Activated CD4-positive, alpha-beta T cell treated with anti-CD3 and anti-CD28 coated beads for 36 hours (primary cell): ENCODE measurements at regions of chr2 and their contacts with region 1.

Region 1: DNA sequence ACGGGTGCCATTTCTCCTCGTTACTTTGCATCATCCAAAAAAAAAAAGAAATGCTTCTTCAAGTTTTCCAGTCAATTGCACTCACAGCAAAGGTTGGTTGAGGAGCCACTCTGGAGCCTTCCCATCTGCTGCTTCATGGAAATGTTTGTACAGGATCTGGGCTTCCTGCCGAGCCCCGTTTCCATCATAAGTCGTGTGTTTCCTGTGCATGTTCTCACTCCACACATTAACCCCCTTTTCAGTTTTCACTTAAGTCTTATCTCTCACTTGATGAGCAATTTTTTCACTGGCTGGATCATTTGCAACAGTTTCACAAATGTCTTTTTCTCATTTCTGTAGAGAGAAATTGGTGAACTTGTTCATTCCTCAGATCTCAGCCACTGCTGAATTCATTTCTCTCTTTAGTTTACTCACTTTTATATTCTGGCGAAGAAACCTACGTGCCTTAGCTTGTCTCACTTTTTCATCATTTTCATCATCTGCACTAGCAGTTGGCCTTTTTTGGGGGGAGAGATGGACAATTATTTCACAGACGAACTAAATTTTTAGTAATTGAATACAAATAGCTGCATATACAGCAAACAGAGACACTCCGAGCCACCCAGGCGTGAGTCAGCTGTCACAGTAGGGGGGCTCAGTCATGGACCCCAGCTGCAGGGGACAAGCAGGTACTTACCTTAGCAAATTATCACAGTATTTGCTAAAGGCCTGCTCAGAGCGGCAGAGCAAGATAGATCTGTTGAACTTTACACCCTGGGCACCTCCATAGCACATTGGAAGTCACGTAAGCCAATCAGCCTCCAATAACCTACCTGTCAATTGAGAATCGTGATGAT is 750.8 kb upstream of the ID2 start:
- DNase-seq: peak; percentile 56
- ATAC-seq: peak; percentile 80
- H3K4me3 Mint-ChIP-seq: peak overlapping the region; percentile 0
- H3K27ac Mint-ChIP-seq: peak overlapping the region; percentile 93
- H3K4me1 Mint-ChIP-seq: peaks cover 33% of the 10 kb centered on the region
- H3K27me3 Mint-ChIP-seq: no peaks in the 10 kb centered on the region

Region 2: DNA sequence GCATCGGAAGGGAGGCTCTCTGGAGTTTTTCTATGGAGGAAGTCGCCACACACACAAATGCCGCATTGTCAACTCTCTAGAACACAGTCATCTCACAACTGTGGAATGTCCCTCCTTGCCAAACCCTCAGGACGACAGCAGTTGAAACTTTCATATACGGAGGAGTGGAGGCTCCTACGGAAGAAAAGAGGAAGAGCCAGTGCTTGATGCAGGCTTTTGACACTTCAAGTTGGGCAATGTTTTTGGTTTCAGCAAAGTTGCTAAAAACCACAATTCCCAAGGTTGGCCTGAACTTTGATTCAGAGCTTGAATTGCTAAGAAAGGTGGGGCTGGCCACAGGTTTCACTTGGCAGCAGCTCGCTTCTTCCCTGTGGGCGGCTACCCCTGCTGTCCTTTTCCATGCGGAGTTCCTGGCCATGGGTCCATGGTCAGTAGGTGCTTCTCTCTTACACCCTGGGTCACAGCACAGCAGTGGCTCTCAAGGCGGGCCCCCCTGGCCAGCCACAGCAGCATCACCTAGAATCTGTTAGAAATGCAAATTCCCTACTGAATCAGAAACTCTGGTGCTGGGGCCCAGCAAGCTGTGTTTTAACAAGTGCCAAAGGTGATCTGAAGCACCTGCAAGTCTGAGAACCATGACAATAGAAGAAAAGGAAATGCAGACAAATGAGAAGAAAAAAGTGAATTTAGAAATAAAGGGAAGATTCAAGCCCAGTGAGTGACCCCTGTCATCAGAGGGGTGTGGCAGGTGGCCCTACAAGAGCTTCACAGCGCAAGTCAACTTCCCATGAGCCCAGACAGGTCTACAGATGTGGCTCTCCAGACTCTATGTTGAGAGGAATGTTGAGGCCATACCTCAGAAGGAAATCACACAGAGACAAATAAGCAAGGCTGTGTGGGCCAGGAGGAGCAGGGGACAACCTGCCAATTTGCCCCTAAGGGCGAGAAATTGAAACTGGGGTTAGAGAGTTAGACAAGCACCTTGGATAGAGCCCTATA is 157.4 kb before region 1 on chr2:
- CTCF ChIA-PET with region 1: no interaction called
- POLR2A ChIA-PET with region 1: no interaction called
- intact Hi-C with region 1: loop called in 1 of 2 experiments (anchors 5 kb)
- DNase-seq: peak; percentile 66
- ATAC-seq: peak; percentile 76
- H3K4me3 Mint-ChIP-seq: peak overlapping the region; percentile 11
- H3K27ac Mint-ChIP-seq: peak overlapping the region; percentile 64
- H3K4me1 Mint-ChIP-seq: peaks cover 28% of the 10 kb centered on the region
- H3K27me3 Mint-ChIP-seq: peaks cover 3% of the 10 kb centered on the region

Region 3: DNA sequence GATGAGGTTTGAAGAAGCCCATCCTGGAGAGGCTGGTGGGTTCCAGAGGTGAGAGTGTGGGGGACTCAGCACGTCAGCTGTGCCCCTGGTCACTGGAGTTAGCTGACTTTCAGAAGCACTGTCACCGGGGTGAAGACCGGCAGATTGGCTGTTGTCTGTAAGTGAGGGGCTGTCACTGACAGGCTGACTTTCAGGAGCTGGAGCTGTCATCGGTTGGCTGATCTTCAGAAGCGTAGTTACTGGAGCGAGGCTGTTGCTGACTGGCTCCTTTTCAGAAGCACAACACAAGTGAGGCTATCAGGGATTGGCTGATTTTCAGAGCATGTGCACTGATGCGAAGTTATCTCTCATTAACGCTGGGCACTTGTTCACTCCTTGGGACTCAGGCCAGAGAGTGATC is 12.4 kb after region 1 on chr2:
- CTCF ChIA-PET with region 1: interaction called, 4 read pairs
- POLR2A ChIA-PET with region 1: no interaction called
- intact Hi-C with region 1: loop called in 1 of 2 experiments (anchors 1 kb)
- DNase-seq: no peak
- ATAC-seq: no peak
- H3K4me3 Mint-ChIP-seq: no peak overlapping the region
- H3K27ac Mint-ChIP-seq: no peak overlapping the region
- H3K4me1 Mint-ChIP-seq: peaks cover 26% of the 10 kb centered on the region
- H3K27me3 Mint-ChIP-seq: no peaks in the 10 kb centered on the region

Region 4: GRCh38 chr2:8169443-8169842 is 238.4 kb after region 1 on chr2:
- CTCF ChIA-PET with region 1: no interaction called
- POLR2A ChIA-PET with region 1: no interaction called
- intact Hi-C with region 1: no loop called
- DNase-seq: no peak
- ATAC-seq: no peak
- H3K4me3 Mint-ChIP-seq: no peak overlapping the region
- H3K27ac Mint-ChIP-seq: no peak overlapping the region
- H3K4me1 Mint-ChIP-seq: peaks cover 13% of the 10 kb centered on the region
- H3K27me3 Mint-ChIP-seq: no peaks in the 10 kb centered on the region